OCI-LY7 (cell line): ENCODE measurements at regions of chr2 and their contacts with region 1.

Region 1: DNA sequence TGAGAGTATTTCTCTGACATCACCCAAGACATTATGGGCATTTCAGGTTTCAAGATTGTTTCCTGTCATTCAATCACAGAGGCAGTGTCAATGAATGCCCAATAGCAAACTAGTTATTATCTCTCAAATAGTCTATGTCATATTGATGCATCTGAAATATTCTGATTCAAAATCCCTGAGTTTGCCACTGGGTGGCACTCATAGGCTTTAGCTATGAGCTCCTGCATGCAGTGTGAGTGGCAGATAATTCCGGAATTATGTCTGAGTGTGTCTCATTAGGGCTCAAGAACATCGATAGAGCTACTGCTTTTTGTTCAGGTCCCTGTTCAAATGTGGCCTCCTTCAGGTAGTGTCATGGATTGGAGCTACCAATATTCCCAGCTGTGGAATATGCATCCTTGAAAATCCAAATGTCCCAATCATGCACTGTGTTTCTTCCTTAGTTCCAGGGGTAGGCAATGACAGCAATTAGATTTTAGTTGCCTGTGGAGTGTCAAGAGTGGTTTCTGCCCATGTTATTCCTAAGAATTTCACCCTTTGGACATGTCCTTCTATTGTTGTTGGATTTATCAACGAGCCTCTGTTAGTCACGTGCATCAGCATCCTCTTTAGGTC is 7.8 kb upstream of the OR6B3 start:
- DNase-seq: peak; percentile 63
- H3K4me3 ChIP-seq: no peak overlapping the region
- H3K27ac ChIP-seq: no peak overlapping the region
- H3K4me1 ChIP-seq: no peaks in the 10 kb centered on the region
- CTCF ChIP-seq: peak; percentile 83

Region 2: GRCh38 chr2:240143801-240144648 is 82.9 kb after region 1 on chr2:
- CTCF ChIA-PET with region 1: interaction called, 3 read pairs
- POLR2A ChIA-PET with region 1: interaction called, 3 read pairs
- intact Hi-C with region 1: loop called (anchors 1 kb)
- DNase-seq: peak; percentile 58
- H3K4me3 ChIP-seq: no peak overlapping the region
- H3K27ac ChIP-seq: no peak overlapping the region
- H3K4me1 ChIP-seq: no peaks in the 10 kb centered on the region
- CTCF ChIP-seq: peak; percentile 90